ENCODE measurements at regions of chr18 and their contacts with region 1.

Region 1: GRCh38 chr18:73136134-73136533 is 268.3 kb upstream of the NETO1 start:
- DNase-seq: peak in 1 of 2 experiments; percentile 41
- H3K4me3 ChIP-seq: no peak overlapping the region
- H3K27ac ChIP-seq: no peak overlapping the region
- H3K4me1 ChIP-seq: no peaks in the 10 kb centered on the region
- H3K27me3 ChIP-seq: no peaks in the 10 kb centered on the region
- CTCF ChIP-seq: peak; percentile 75

Region 2: DNA sequence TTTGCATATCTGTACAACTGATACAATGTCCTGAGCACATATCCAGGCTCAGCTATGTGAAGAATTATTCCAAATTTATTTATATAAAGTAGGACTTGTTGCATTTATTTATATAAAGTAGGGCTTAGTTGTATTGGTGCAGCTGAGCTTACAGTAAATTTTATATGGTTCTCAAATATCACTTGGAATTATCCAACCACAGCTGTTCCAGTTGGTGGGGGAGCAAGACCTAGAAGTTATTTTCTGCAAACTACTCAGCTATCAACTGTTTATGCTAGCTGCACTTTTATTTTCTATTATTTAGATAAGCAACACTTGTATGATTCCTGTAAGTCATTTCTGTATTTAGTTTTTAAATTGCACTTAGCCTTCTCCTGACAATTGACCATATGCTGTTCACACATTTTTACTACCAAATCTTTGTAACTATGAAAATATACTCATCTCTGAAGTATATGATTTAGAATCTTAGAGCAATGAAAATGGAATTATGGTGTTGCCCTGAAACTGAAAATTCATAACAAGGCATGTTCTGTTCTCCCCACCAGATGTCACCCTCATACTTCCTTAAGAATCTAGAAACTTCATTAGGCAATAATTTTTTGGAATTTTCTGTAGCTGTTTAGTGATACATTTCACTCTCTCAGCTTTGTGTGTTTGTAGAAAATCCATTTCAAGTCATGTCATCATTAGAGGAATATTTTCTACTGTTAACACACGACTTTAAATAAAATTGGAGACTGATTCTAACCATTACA is 435.0 kb before region 1 on chr18:
- CTCF ChIA-PET with region 1: no interaction called
- POLR2A ChIA-PET with region 1: no interaction called
- intact Hi-C with region 1: loop called (anchors 1 kb)
- DNase-seq: peak in 1 of 2 experiments; percentile 45
- H3K4me3 ChIP-seq: no peak overlapping the region
- H3K27ac ChIP-seq: no peak overlapping the region
- H3K4me1 ChIP-seq: no peaks in the 10 kb centered on the region
- H3K27me3 ChIP-seq: no peaks in the 10 kb centered on the region
- CTCF ChIP-seq: peak; percentile 82

Region 3: DNA sequence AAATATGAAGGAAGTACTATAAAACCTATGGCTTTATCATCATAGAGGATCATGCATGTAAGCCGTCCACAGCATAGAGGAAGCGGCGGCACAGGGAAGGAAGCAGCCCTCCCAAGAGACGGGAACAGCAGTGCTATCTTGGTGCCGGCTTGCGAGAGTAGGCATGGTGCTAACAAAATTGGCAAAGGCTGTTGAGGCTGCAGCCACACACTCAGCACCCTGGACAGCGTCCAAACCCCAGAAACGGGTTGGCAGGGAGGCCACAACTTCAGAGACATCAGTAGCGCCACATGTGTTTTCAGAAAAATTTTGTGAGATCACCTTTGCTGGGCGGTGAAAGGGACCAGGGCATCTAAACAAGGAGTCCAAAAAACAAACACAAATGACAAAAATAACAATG is 306.0 kb before region 1 on chr18:
- CTCF ChIA-PET with region 1: no interaction called
- POLR2A ChIA-PET with region 1: no interaction called
- intact Hi-C with region 1: loop called (anchors 10 kb)
- DNase-seq: peak in 1 of 2 experiments; percentile 23
- H3K4me3 ChIP-seq: no peak overlapping the region
- H3K27ac ChIP-seq: no peak overlapping the region
- H3K4me1 ChIP-seq: no peaks in the 10 kb centered on the region
- H3K27me3 ChIP-seq: no peaks in the 10 kb centered on the region
- CTCF ChIP-seq: no peak

Region 4: GRCh38 chr18:72840109-72840508 is 296.0 kb before region 1 on chr18:
- CTCF ChIA-PET with region 1: no interaction called
- POLR2A ChIA-PET with region 1: interaction called, 11 read pairs
- intact Hi-C with region 1: loop called (anchors 10 kb)
- DNase-seq: no peak
- H3K4me3 ChIP-seq: no peak overlapping the region
- H3K27ac ChIP-seq: no peak overlapping the region
- H3K4me1 ChIP-seq: no peaks in the 10 kb centered on the region
- H3K27me3 ChIP-seq: no peaks in the 10 kb centered on the region
- CTCF ChIP-seq: no peak

Region 5: DNA sequence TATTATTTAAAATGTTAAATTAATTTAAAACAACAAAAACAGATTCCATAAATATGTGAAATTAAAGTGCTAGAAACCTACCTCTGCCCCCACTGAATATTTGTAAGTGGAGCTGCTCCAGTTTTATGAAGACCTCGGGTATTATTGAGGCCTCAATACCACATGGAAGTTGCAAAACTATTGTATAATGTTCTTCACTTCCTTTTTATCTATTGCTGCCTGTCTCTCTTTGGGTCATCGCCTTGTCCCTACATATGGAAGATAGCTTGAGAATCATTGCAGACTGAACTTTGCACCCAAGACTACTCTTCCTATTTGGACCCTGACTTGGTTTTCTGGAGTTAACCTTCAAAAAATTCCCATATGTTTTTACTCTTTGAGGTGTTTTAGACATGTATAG is 56.2 kb before region 1 on chr18:
- CTCF ChIA-PET with region 1: no interaction called
- POLR2A ChIA-PET with region 1: no interaction called
- intact Hi-C with region 1: no loop called
- DNase-seq: no peak
- H3K4me3 ChIP-seq: no peak overlapping the region
- H3K27ac ChIP-seq: no peak overlapping the region
- H3K4me1 ChIP-seq: no peaks in the 10 kb centered on the region
- H3K27me3 ChIP-seq: no peaks in the 10 kb centered on the region
- CTCF ChIP-seq: no peak

Measured in PC-9 (cell line).